CD4-positive, alpha-beta T cell (primary cell): ENCODE measurements at regions of chr2 and their contacts with region 1.

Region 1: GRCh38 chr2:84846041-84846663 is 34.7 kb downstream of the TRABD2A start:
- DNase-seq: peak in 9 of 14 experiments; percentile 22 to 87 (median 60)
- ATAC-seq: peak; percentile 66
- H3K4me3 ChIP-seq: no peak overlapping the region
- H3K4me3 Mint-ChIP-seq: peak overlapping the region; percentile 84
- H3K27ac ChIP-seq: peak overlapping the region; percentile 81 to 90
- H3K27ac Mint-ChIP-seq: peak overlapping the region; percentile 96
- H3K4me1 ChIP-seq: peaks cover 100% of the 10 kb centered on the region
- H3K4me1 Mint-ChIP-seq: peaks cover 95% of the 10 kb centered on the region
- H3K27me3 ChIP-seq: no peaks in the 10 kb centered on the region
- H3K27me3 Mint-ChIP-seq: no peaks in the 10 kb centered on the region
- CTCF ChIP-seq: no peak

Region 2: DNA sequence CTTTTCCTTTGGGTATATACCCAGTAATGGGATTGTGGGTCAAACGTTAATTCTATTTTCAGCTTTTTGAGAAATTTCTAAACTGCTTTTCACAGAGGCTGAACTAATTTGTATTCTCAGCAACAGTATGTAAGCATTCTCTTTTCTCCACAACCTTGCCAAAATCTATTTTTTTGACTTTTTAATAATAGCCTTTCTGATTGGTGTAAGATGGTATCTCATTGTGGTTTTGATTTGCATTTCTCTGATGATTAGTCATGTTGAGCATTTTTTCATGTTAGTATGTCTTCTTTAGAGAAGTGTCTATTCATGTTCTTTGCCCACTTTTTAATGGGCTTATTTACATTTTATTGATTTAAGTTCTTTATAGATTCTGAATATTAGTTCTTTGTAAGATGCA is 110.8 kb before region 1 on chr2:
- CTCF ChIA-PET with region 1: no interaction called
- POLR2A ChIA-PET with region 1: no interaction called
- intact Hi-C with region 1: no loop called
- DNase-seq: no peak
- ATAC-seq: no peak
- H3K4me3 ChIP-seq: no peak overlapping the region
- H3K4me3 Mint-ChIP-seq: no peak overlapping the region
- H3K27ac ChIP-seq: no peak overlapping the region
- H3K27ac Mint-ChIP-seq: no peak overlapping the region
- H3K4me1 ChIP-seq: peaks cover 4% of the 10 kb centered on the region
- H3K4me1 Mint-ChIP-seq: peaks cover 54% of the 10 kb centered on the region
- H3K27me3 ChIP-seq: no peaks in the 10 kb centered on the region
- H3K27me3 Mint-ChIP-seq: no peaks in the 10 kb centered on the region
- CTCF ChIP-seq: no peak

Region 3: DNA sequence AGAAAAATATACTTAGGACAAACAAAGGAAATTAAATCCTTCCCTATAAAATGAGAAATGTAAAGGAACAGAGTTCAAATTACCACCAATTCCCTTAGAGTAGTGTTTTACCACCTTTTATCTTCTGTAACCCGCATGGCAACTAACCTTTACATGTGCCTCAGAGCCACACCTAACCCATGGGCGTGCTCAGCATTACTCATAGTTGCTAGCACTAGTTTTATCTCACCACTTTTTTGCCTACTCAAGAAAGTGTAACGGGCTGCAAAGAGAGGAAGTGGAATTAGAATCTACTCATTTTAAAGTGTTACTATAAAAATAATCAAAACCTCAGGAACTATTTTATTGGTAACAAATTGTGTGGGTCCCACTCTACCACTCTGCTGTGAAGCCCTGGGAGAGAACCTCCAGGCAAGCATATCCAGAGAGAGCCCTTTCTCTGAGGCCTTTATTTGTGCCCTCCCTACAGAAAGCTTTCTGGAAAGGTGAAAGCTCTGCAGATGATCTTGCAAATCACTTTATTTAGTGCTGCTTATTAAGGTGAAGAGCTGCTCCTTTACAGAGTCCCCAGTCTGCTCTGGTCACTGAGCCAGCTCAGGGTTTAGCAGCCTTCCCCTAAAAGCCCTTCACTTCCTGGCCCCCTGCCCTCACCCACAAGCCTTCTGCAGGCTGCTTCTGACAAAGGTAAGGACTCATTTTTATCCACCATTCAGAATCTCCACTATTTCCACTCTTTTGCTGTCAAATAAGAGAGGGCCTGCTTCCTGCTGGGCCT is 64.0 kb before region 1 on chr2:
- CTCF ChIA-PET with region 1: interaction called, 3 read pairs
- POLR2A ChIA-PET with region 1: interaction called, 21 read pairs
- intact Hi-C with region 1: loop called (anchors 2 to 5 kb)
- DNase-seq: peak; percentile 25 to 91 (median 57)
- ATAC-seq: peak; percentile 83
- H3K4me3 ChIP-seq: no peak overlapping the region
- H3K4me3 Mint-ChIP-seq: peak overlapping the region; percentile 81
- H3K27ac ChIP-seq: peak overlapping the region; percentile 67 to 70
- H3K27ac Mint-ChIP-seq: peak overlapping the region; percentile 90
- H3K4me1 ChIP-seq: peaks cover 47% of the 10 kb centered on the region
- H3K4me1 Mint-ChIP-seq: peaks cover 93% of the 10 kb centered on the region
- H3K27me3 ChIP-seq: no peaks in the 10 kb centered on the region
- H3K27me3 Mint-ChIP-seq: no peaks in the 10 kb centered on the region
- CTCF ChIP-seq: no peak

Region 4: DNA sequence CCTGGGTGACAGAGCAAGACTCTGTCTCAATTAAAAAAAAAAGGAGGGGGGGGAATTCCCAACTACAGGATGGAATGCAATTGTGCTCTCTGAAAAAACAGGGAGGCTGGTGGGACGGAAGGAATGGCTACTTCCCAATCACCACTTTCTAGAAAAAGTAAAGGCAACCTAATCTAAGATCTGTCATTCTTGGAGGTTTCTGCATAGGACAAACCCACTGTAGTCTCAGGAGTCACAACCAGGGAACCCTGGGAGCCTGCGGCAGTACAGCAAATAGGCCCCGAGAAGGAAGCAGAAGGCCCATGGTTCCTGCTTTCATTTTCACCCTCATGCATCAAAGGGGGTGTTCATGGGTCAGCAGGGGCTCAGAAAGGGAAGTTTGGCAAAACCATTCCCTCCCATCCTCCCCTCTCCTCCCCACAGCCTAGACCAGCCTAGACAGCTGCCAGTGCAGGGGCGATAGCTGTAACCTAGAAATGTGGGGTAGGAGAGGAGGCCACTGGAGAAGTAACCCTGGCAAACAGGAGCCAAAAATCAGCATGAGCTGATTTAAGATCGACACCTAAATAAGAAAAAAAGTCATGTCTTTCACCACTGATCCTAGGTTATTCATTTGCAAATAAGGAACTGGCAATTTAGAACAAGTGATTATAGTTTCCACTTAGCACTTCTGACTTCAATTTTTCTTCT is 13.2 kb before region 1 on chr2:
- CTCF ChIA-PET with region 1: no interaction called
- POLR2A ChIA-PET with region 1: interaction called, 26 read pairs
- intact Hi-C with region 1: loop called in 1 of 2 experiments (anchors 2 kb)
- DNase-seq: peak in 4 of 14 experiments; percentile 56 to 65 (median 64)
- ATAC-seq: peak; percentile 61
- H3K4me3 ChIP-seq: peak overlapping the region; percentile 44
- H3K4me3 Mint-ChIP-seq: peak overlapping the region; percentile 80
- H3K27ac ChIP-seq: peak overlapping the region; percentile 68 to 71
- H3K27ac Mint-ChIP-seq: no peak overlapping the region
- H3K4me1 ChIP-seq: peaks cover 68% of the 10 kb centered on the region
- H3K4me1 Mint-ChIP-seq: peaks cover 45% of the 10 kb centered on the region
- H3K27me3 ChIP-seq: no peaks in the 10 kb centered on the region
- H3K27me3 Mint-ChIP-seq: no peaks in the 10 kb centered on the region
- CTCF ChIP-seq: no peak

Region 5: DNA sequence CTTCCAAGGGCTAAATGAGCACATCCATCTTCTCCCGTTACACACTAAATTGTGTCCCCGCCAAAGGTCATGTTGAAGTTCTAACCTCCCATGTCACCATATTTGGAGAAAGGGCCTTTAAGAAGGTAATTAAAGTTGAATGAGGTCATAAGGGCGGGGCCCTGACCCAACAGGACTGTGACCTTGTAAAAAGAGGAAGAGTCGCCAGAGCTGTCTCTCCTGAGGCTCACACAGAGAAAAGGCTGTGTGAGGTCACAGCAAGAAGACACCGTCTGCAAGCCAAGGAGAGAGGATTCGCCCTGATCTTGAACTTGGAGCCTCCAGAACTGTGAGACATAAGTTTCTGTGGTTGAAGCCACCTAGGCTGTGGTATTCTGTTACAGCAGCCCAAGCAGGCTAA is 10.6 kb after region 1 on chr2:
- CTCF ChIA-PET with region 1: no interaction called
- POLR2A ChIA-PET with region 1: interaction called, 132 read pairs
- intact Hi-C with region 1: loop called in 1 of 2 experiments (anchors 1 kb)
- DNase-seq: peak in 5 of 14 experiments; percentile 37 to 65 (median 55)
- ATAC-seq: peak; percentile 51
- H3K4me3 ChIP-seq: no peak overlapping the region
- H3K4me3 Mint-ChIP-seq: peak overlapping the region; percentile 32
- H3K27ac ChIP-seq: peak overlapping the region; percentile 53 to 69
- H3K27ac Mint-ChIP-seq: peak overlapping the region; percentile 94
- H3K4me1 ChIP-seq: peaks cover 95% of the 10 kb centered on the region
- H3K4me1 Mint-ChIP-seq: peaks cover 96% of the 10 kb centered on the region
- H3K27me3 ChIP-seq: no peaks in the 10 kb centered on the region
- H3K27me3 Mint-ChIP-seq: no peaks in the 10 kb centered on the region
- CTCF ChIP-seq: no peak

Region 6: DNA sequence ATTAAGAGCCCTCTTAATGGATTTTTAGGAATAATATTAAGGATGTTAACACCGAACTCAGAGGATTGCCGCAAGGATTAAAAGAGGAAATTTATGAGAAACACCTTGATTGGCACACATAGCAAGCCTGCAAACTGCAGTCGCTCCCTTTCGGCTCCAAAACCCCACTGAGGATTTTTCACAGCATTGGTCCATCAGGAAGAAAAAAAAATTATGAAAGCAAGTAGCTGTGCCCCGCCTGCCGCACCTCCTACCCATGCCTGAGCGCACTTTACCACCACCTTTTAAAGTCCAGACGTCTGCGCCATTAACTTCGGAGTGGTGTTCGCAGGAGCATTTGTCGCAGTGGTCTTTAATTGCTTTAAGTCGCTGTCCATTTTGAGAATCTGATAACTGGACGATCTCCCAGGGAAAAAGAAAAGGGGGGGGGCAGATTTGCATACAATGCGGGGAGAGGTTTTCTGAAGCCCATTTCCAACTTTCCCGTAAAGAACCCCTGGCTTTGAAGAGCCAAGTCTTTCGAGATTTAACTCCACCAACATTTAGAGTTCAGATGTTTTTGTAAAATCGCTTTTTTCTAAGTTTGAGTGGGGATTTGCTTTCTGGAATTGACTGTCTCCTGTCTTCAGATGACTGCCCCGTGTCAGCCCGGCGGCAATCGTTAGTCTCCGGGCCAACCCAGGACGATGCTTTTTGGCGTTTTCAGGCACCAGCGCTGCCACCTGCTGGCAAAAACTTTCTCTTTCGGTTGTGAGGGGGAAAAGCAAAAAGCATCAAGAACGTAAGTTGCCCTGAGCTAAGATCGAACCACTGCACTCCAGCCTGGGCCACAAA is 35.6 kb after region 1 on chr2:
- CTCF ChIA-PET with region 1: interaction called, 5 read pairs
- POLR2A ChIA-PET with region 1: interaction called, 138 read pairs
- intact Hi-C with region 1: loop called in 1 of 2 experiments (anchors 1 kb)
- DNase-seq: peak; percentile 79 to 92 (median 86)
- ATAC-seq: peak; percentile 66
- H3K4me3 ChIP-seq: peak overlapping the region; percentile 91
- H3K4me3 Mint-ChIP-seq: peak overlapping the region; percentile 98
- H3K27ac ChIP-seq: peak overlapping the region; percentile 64 to 79
- H3K27ac Mint-ChIP-seq: peak overlapping the region; percentile 92
- H3K4me1 ChIP-seq: peaks cover 35% of the 10 kb centered on the region
- H3K4me1 Mint-ChIP-seq: peaks cover 55% of the 10 kb centered on the region
- H3K27me3 ChIP-seq: no peaks in the 10 kb centered on the region
- H3K27me3 Mint-ChIP-seq: no peaks in the 10 kb centered on the region
- CTCF ChIP-seq: peak; percentile 79

Region 7: GRCh38 chr2:84888401-84889276 is 42.5 kb after region 1 on chr2:
- CTCF ChIA-PET with region 1: no interaction called
- POLR2A ChIA-PET with region 1: interaction called, 11 read pairs
- intact Hi-C with region 1: no loop called
- DNase-seq: peak in 10 of 14 experiments; percentile 29 to 89 (median 54)
- ATAC-seq: peak; percentile 95
- H3K4me3 ChIP-seq: peak overlapping the region; percentile 29
- H3K4me3 Mint-ChIP-seq: peak overlapping the region; percentile 77
- H3K27ac ChIP-seq: peak overlapping the region; percentile 75 to 76
- H3K27ac Mint-ChIP-seq: peak overlapping the region; percentile 93
- H3K4me1 ChIP-seq: peaks cover 28% of the 10 kb centered on the region
- H3K4me1 Mint-ChIP-seq: peaks cover 46% of the 10 kb centered on the region
- H3K27me3 ChIP-seq: no peaks in the 10 kb centered on the region
- H3K27me3 Mint-ChIP-seq: no peaks in the 10 kb centered on the region
- CTCF ChIP-seq: no peak